Dorsolateral prefrontal cortex (tissue), 120 donors: ENCODE measurements at regions of chr2 and their contacts with region 1.

Region 1: GRCh38 chr2:85648619-85649018 is 19.4 kb downstream of the SFTPB start:
- DNase-seq: no peak
- H3K4me3 ChIP-seq: no peak overlapping the region
- H3K27ac ChIP-seq: peak overlapping the region in 38 of 59 donors; percentile 1 to 75 (median 45)
- H3K27me3 ChIP-seq: no peaks in the 10 kb centered on the region
- CTCF ChIP-seq: peak in 36 of 56 donors; percentile 7 to 49 (median 28)

Region 2: GRCh38 chr2:85723707-85724360 is 75.2 kb after region 1 on chr2:
- intact Hi-C with region 1: loop called in 1 of 2 experiments (anchors 5 kb)
- DNase-seq: no peak
- H3K4me3 ChIP-seq: no peak overlapping the region
- H3K27ac ChIP-seq: peak overlapping the region in 1 of 59 donors; percentile 14
- H3K27me3 ChIP-seq: no peaks in the 10 kb centered on the region
- CTCF ChIP-seq: no peak